ENCODE measurements at regions of chr1 and their contacts with region 1.

Region 1: DNA sequence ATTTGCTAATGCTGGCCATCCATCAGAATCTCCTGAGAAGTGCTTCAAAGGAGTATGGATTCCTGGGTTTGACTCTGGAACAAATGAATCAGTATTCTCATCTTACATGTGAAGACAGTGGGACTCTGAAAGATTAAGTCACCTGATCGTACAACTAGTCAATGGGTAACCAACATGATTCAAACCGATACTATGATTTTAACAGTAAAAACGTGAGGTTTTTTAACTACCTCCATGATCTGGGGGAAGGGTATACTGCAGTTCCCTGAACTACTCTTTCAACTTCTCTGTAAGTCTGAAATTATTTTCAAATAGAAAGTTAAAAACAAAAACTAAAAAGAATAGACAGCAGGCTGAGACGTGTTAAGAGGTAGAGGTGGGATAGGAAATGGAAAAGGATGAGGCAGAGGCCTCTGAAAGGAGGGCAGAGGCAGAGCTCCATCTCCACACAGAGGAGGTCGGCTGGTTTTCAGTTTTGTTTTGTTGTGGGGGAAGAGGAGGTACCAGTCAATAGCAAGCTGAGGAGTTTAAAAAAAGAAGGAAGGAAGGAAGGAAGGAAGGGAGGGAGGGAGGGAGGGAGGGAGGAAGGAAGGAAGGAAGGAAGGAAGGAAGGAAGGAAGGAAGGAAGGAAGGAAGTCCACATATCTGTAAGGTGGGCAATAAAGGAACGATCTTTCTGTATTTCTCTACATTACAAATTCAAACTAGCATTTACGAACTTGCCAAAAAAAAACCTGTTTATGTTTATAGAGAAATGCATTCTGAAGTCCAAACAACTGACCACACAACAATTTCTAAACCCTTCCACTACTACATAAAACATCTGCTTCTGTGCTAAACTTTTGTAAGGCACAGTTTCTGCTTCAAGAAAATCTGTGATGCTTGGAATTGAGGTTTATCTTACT is 213.1 kb downstream of the RERE start:
- DNase-seq: peak; percentile 73
- H3K4me3 Mint-ChIP-seq: peak overlapping the region; percentile 67
- H3K27ac Mint-ChIP-seq: peak overlapping the region; percentile 97
- H3K4me1 Mint-ChIP-seq: peaks cover 49% of the 10 kb centered on the region
- H3K27me3 Mint-ChIP-seq: no peaks in the 10 kb centered on the region

Region 2: GRCh38 chr1:8396786-8397406 is 207.4 kb before region 1 on chr1:
- CTCF ChIA-PET with region 1: no interaction called
- intact Hi-C with region 1: loop called (anchors 1 kb)
- DNase-seq: peak; percentile 71
- H3K4me3 Mint-ChIP-seq: peak overlapping the region; percentile 10
- H3K27ac Mint-ChIP-seq: peak overlapping the region; percentile 83
- H3K4me1 Mint-ChIP-seq: peaks cover 71% of the 10 kb centered on the region
- H3K27me3 Mint-ChIP-seq: no peaks in the 10 kb centered on the region

Region 3: GRCh38 chr1:8525558-8526275 is 78.6 kb before region 1 on chr1:
- CTCF ChIA-PET with region 1: no interaction called
- intact Hi-C with region 1: loop called (anchors 1 kb)
- DNase-seq: peak; percentile 86
- H3K4me3 Mint-ChIP-seq: no peak overlapping the region
- H3K27ac Mint-ChIP-seq: no peak overlapping the region
- H3K4me1 Mint-ChIP-seq: peaks cover 26% of the 10 kb centered on the region
- H3K27me3 Mint-ChIP-seq: no peaks in the 10 kb centered on the region

Region 4: DNA sequence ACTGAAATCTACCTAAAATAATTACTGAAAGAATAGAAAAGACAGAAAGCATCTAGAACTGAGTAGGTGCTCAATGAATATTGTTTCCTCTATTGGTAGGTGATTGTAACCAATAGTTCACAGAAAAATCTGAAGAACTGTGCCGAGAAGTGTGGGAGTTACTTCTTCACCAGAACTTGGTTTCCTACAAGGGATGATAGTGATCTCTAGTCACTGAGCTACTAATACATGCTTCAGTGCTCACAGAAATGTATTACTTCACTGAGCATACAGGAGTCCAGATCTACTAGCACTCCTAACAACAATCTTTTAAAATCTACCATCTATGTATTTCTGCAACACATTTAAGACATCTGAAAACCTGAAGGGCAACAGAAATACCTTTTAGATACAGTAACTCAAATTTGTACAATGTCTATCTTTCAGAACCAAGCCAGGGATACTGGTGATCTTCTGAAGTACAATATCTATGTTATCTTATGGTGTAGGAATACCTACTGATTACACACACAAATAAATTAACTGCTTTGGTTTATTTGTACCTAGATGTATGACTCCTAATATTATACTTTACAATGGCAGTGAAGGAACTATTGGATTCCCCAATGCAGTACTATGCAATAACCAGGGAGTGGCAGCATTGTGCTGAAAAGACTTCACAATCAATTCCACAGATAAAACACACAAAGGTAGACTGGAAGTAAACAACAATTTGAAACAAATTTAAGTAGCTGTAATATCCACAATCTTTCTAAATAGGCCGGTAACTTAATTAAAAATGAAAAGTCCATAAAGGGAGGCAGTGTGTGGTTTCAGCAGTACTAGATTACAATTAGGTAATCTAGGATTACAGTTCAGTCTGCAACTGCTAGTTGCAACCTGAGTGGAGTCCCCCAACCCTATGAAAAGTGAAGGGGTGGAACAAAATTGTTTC is 43.4 kb before region 1 on chr1:
- CTCF ChIA-PET with region 1: interaction called, 16 read pairs
- intact Hi-C with region 1: loop called (anchors 1 kb)
- DNase-seq: peak; percentile 53
- H3K4me3 Mint-ChIP-seq: no peak overlapping the region
- H3K27ac Mint-ChIP-seq: no peak overlapping the region
- H3K4me1 Mint-ChIP-seq: peaks cover 26% of the 10 kb centered on the region
- H3K27me3 Mint-ChIP-seq: no peaks in the 10 kb centered on the region

Region 5: GRCh38 chr1:8571200-8571984 is 32.9 kb before region 1 on chr1:
- CTCF ChIA-PET with region 1: no interaction called
- intact Hi-C with region 1: no loop called
- DNase-seq: no peak
- H3K4me3 Mint-ChIP-seq: no peak overlapping the region
- H3K27ac Mint-ChIP-seq: no peak overlapping the region
- H3K4me1 Mint-ChIP-seq: no peaks in the 10 kb centered on the region
- H3K27me3 Mint-ChIP-seq: no peaks in the 10 kb centered on the region

Region 6: DNA sequence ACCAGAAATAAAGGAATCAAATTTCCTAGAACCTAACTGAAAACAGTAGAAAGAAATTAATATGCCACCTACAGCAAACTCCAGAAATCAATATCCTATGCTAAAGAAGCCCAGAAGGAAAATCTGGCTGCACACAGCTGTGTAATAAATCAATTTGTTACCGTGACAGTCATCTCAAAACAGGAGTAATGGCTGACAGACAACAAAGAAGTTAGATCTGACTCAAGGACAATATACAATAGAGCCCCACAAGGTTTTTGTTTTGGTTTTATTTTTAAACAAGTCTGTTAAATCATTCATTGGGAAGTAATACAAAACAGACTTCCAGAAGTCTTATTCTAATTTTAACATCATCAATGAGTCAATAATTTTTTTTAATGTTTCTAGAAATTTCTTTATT is 44.7 kb after region 1 on chr1:
- CTCF ChIA-PET with region 1: interaction called, 3 read pairs
- intact Hi-C with region 1: loop called (anchors 1 kb)
- DNase-seq: peak; percentile 13
- H3K4me3 Mint-ChIP-seq: no peak overlapping the region
- H3K27ac Mint-ChIP-seq: no peak overlapping the region
- H3K4me1 Mint-ChIP-seq: peaks cover 49% of the 10 kb centered on the region
- H3K27me3 Mint-ChIP-seq: no peaks in the 10 kb centered on the region

Region 7: GRCh38 chr1:8671306-8671917 is 67.1 kb after region 1 on chr1:
- CTCF ChIA-PET with region 1: interaction called, 3 read pairs
- intact Hi-C with region 1: loop called (anchors 1 kb)
- DNase-seq: peak; percentile 43
- H3K4me3 Mint-ChIP-seq: no peak overlapping the region
- H3K27ac Mint-ChIP-seq: no peak overlapping the region
- H3K4me1 Mint-ChIP-seq: peaks cover 52% of the 10 kb centered on the region
- H3K27me3 Mint-ChIP-seq: no peaks in the 10 kb centered on the region

Measured in activated naive CD4-positive, alpha-beta T cell treated with anti-CD3 and anti-CD28 coated beads for 36 hours (primary cell).